ENCODE measurements at regions of chr22 and their contacts with region 1.

Region 1: DNA sequence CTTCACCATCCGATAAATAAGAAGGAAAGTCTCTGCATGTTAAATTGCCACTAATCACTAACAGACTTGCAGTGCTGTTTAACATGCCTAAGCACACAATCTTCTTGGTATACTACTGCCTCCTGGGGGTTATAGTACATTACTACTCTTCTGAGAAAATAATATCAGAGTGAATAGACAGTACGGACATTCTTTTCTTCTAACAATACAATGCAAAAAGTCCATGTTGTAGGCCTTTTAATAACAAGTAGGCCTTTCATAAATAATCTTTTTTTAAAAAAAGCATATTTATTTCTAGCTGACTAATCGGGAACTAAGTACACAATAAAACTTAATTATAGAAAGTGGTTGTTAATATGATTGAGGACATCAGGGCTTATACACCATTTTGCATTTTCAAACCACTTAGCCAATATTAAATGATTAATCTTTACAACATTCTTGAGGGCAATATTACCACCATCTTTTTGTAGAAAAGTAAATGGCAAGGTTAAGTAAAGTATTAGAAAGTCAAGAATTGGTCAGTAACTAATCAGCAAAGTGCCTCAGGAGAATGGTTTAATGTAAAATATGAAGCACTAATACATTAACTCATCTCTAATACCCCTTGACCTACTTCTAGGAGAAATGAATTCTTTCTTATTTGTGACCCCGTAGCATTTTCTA is 84.7 kb downstream of the TTC28 start:
- DNase-seq: no peak
- H3K4me3 ChIP-seq: no peak overlapping the region
- H3K27ac ChIP-seq: no peak overlapping the region
- H3K4me1 ChIP-seq: peaks cover 0 to 11% (median 1%) of the 10 kb centered on the region in 4 donors
- H3K27me3 ChIP-seq: no peaks in the 10 kb centered on the region
- CTCF ChIP-seq: peak in 3 of 4 experiments; percentile 75 to 84 (median 79)
- EP300 ChIP-seq: no peak
- POLR2A ChIP-seq: no peak

Region 2: GRCh38 chr22:27880778-27881394 is 714.0 kb before region 1 on chr22:
- intact Hi-C with region 1: loop called (anchors 10 kb)
- DNase-seq: no peak
- H3K4me3 ChIP-seq: no peak overlapping the region
- H3K27ac ChIP-seq: peak overlapping the region; percentile 82 to 87 (median 84)
- H3K4me1 ChIP-seq: peaks cover 0 to 99% (median 90%) of the 10 kb centered on the region in 4 donors
- H3K27me3 ChIP-seq: no peaks in the 10 kb centered on the region
- CTCF ChIP-seq: peak; percentile 74 to 86 (median 80)
- EP300 ChIP-seq: no peak
- POLR2A ChIP-seq: no peak

Region 3: GRCh38 chr22:28019881-28020871 is 574.8 kb before region 1 on chr22:
- intact Hi-C with region 1: loop called (anchors 1 kb)
- DNase-seq: peak; percentile 90
- H3K4me3 ChIP-seq: peak overlapping the region in 2 of 4 donors; percentile 4 to 8
- H3K27ac ChIP-seq: peak overlapping the region in 2 of 4 donors; percentile 40 to 59
- H3K4me1 ChIP-seq: peaks cover 0 to 17% (median 13%) of the 10 kb centered on the region in 4 donors
- H3K27me3 ChIP-seq: no peaks in the 10 kb centered on the region
- CTCF ChIP-seq: peak; percentile 87 to 98 (median 94)
- EP300 ChIP-seq: no peak
- POLR2A ChIP-seq: no peak

Region 4: GRCh38 chr22:28051787-28052356 is 543.1 kb before region 1 on chr22:
- intact Hi-C with region 1: loop called (anchors 1 kb)
- DNase-seq: peak; percentile 84
- H3K4me3 ChIP-seq: no peak overlapping the region
- H3K27ac ChIP-seq: no peak overlapping the region
- H3K4me1 ChIP-seq: no peaks in the 10 kb centered on the region
- H3K27me3 ChIP-seq: no peaks in the 10 kb centered on the region
- CTCF ChIP-seq: peak; percentile 51 to 91 (median 80)
- EP300 ChIP-seq: no peak
- POLR2A ChIP-seq: no peak

Region 5: DNA sequence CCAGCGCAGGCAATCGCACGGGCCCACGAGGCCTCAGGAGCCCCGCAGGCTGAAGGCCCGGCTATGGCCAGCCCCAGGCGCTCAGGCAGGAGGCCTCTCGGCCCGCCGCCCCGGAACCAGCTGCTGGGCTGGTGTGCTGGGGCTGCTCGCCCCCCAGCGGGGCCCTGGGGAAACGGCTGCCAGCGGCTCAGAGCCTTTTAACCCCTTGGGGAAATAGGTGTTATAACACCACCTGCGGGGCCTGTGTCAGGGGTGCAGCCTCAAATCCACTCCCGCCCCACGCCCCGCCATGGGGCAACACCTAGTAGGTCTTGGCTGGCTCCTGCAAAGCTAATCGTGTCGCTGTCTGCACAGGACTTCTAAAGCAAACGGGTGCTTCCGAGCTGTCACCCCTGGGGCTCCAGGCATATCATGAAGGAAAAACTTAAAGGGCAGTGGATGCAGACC is 152.6 kb before region 1 on chr22:
- intact Hi-C with region 1: loop called (anchors 10 kb)
- DNase-seq: peak; percentile 85
- H3K4me3 ChIP-seq: peak overlapping the region; percentile 35 to 65 (median 56)
- H3K27ac ChIP-seq: peak overlapping the region; percentile 74 to 85 (median 77)
- H3K4me1 ChIP-seq: peaks cover 0 to 37% (median 22%) of the 10 kb centered on the region in 4 donors
- H3K27me3 ChIP-seq: no peaks in the 10 kb centered on the region
- CTCF ChIP-seq: peak; percentile 33 to 65 (median 62)
- EP300 ChIP-seq: no peak
- POLR2A ChIP-seq: no peak

Region 6: GRCh38 chr22:28674121-28674563 is 79.2 kb after region 1 on chr22:
- intact Hi-C with region 1: no loop called
- DNase-seq: no peak
- H3K4me3 ChIP-seq: no peak overlapping the region
- H3K27ac ChIP-seq: no peak overlapping the region
- H3K4me1 ChIP-seq: peaks cover 0 to 9% (median 4%) of the 10 kb centered on the region in 4 donors
- H3K27me3 ChIP-seq: no peaks in the 10 kb centered on the region
- CTCF ChIP-seq: no peak
- EP300 ChIP-seq: no peak
- POLR2A ChIP-seq: no peak

Measured in sigmoid colon (tissue), 7 donors.